HepG2 (cell line): ENCODE measurements at regions of chr6 and their contacts with region 1.

Region 1: GRCh38 chr6:27518881-27519795 is 46.2 kb upstream of the ZNF184 start:
- DNase-seq: peak; percentile 82
- ATAC-seq: peak; percentile 83
- H3K4me3 ChIP-seq: peak overlapping the region; percentile 72 to 86 (median 85)
- H3K27ac ChIP-seq: peak overlapping the region; percentile 39
- H3K4me1 ChIP-seq: peaks cover 19% of the 10 kb centered on the region
- H3K27me3 ChIP-seq: peaks cover 2 to 18% of the 10 kb centered on the region in 2 experiments; a peak in 1 of 5 replicates
- CTCF ChIP-seq: peak; percentile 73
- EP300 ChIP-seq: no peak
- POLR2A ChIP-seq: no peak
- RAD21 ChIP-seq: peak; percentile 43; the same call in 1 of the 2 replicates

Region 2: GRCh38 chr6:27188885-27189418 is 330.2 kb before region 1 on chr6:
- CTCF ChIA-PET with region 1: no interaction called
- POLR2A ChIA-PET with region 1: no interaction called
- in situ Hi-C with region 1: no loop called
- intact Hi-C with region 1: loop called (anchors 5 kb)
- DNase-seq: peak; percentile 66
- ATAC-seq: peak; percentile 88
- H3K4me3 ChIP-seq: peak overlapping the region; percentile 53 to 76 (median 75)
- H3K27ac ChIP-seq: no peak overlapping the region
- H3K4me1 ChIP-seq: peaks cover 16% of the 10 kb centered on the region
- H3K27me3 ChIP-seq: peaks cover 0 to 26% of the 10 kb centered on the region in 2 experiments; a peak in 3 of 5 replicates
- CTCF ChIP-seq: peak; percentile 79
- EP300 ChIP-seq: no peak
- POLR2A ChIP-seq: no peak
- RAD21 ChIP-seq: peak; percentile 82

Region 3: DNA sequence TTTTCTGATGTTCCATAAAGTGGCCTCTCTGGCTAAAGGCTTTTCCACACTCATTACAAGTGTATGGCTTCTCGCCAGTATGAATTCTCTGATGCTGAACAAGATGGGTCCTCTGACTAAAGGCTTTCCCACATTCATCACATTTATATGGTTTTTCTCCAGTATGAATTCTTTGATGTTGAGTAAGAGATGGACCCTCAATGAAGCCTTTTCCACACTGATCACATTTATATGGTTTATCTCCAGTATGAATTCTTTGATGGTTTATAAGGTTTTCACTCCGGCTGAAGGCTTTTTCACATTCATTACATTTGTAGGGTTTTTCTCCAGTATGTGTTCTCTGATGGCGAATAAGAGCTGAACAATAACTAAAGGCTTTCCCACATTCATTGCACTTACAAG is 66.6 kb before region 1 on chr6:
- CTCF ChIA-PET with region 1: no interaction called
- POLR2A ChIA-PET with region 1: no interaction called
- in situ Hi-C with region 1: no loop called
- intact Hi-C with region 1: no loop called
- DNase-seq: no peak
- ATAC-seq: no peak
- H3K4me3 ChIP-seq: no peak overlapping the region
- H3K27ac ChIP-seq: no peak overlapping the region
- H3K4me1 ChIP-seq: no peaks in the 10 kb centered on the region
- H3K27me3 ChIP-seq: no peaks in the 10 kb centered on the region
- CTCF ChIP-seq: no peak
- EP300 ChIP-seq: no peak
- POLR2A ChIP-seq: no peak
- RAD21 ChIP-seq: no peak

Region 4: GRCh38 chr6:27503436-27504030 is 15.6 kb before region 1 on chr6:
- CTCF ChIA-PET with region 1: no interaction called
- POLR2A ChIA-PET with region 1: interaction called, 3 read pairs
- in situ Hi-C with region 1: no loop called
- intact Hi-C with region 1: loop called (anchors 1 kb)
- DNase-seq: peak; percentile 82
- ATAC-seq: peak; percentile 60
- H3K4me3 ChIP-seq: peak overlapping the region; percentile 78 to 87 (median 79)
- H3K27ac ChIP-seq: peak overlapping the region; percentile 37
- H3K4me1 ChIP-seq: peaks cover 46% of the 10 kb centered on the region
- H3K27me3 ChIP-seq: peaks cover 0 to 4% of the 10 kb centered on the region in 2 experiments; a peak in 2 of 5 replicates
- CTCF ChIP-seq: no peak
- EP300 ChIP-seq: no peak
- POLR2A ChIP-seq: no peak
- RAD21 ChIP-seq: no peak

Region 5: DNA sequence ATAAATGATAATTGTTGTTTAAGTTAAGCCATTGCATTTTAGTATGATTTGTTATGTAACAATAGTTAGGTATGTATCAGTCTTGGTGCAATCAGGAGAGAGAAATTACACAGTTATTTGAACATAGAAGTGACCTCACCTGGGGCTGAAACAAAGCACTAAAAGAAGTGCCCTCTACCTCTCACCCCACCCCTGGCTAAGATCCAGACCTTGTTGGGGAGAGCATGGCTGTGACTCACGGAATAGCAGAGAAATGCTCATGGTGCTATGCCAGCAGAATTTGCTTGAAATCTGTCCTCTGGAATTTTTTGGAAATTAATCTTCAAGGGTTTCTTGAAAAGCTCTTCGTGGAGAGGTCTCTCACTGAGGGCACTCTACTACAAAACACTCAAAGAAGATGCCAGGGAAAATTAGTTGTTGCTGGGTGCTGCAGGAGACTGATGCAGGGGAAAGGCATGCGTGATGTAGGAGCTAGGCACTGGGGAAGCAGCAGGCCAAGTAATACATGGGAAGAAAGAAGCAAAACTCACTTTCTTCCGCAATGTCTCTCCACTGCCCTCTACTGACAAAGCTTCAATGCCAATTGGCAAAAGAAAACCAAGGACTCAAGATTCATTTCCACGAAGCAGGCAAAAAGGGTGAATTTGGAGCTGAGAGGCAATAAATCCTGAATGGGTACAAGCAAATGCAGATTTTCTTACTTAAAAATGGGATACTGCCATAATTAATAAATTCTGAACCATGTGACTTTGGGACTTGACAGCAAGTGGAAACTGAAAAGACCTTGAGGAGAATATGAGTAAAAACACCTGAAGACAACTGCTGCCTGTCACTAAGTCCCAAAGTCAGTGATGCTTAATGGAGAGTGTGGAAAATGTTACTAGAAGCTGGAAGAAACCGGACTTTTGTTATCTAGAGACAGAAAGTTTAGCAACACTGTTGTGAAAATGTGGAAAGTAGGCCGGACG is 90.1 kb after region 1 on chr6:
- CTCF ChIA-PET with region 1: interaction called, 21 read pairs
- POLR2A ChIA-PET with region 1: no interaction called
- in situ Hi-C with region 1: loop called (anchors 25 kb)
- intact Hi-C with region 1: loop called (anchors 1 kb)
- DNase-seq: peak; percentile 61
- ATAC-seq: peak; percentile 31; the same call in 2 of the 3 replicates
- H3K4me3 ChIP-seq: no peak overlapping the region
- H3K27ac ChIP-seq: no peak overlapping the region
- H3K4me1 ChIP-seq: peaks cover 31% of the 10 kb centered on the region
- H3K27me3 ChIP-seq: no peaks in the 10 kb centered on the region
- CTCF ChIP-seq: peak; percentile 85
- EP300 ChIP-seq: no peak
- POLR2A ChIP-seq: no peak
- RAD21 ChIP-seq: peak; percentile 47; the same call in 1 of the 2 replicates

Region 6: GRCh38 chr6:27753668-27754407 is 234.7 kb after region 1 on chr6:
- CTCF ChIA-PET with region 1: interaction called, 6 read pairs
- POLR2A ChIA-PET with region 1: interaction called, 4 read pairs
- in situ Hi-C with region 1: loop called (anchors 5 kb)
- intact Hi-C with region 1: loop called (anchors 1 kb)
- DNase-seq: peak; percentile 83
- ATAC-seq: peak; percentile 76
- H3K4me3 ChIP-seq: peak overlapping the region; percentile 63 to 88 (median 78)
- H3K27ac ChIP-seq: no peak overlapping the region
- H3K4me1 ChIP-seq: peaks cover 21% of the 10 kb centered on the region
- H3K27me3 ChIP-seq: peaks cover 0 to 3% of the 10 kb centered on the region in 2 experiments; a peak in 1 of 5 replicates
- CTCF ChIP-seq: no peak
- EP300 ChIP-seq: no peak
- POLR2A ChIP-seq: no peak
- RAD21 ChIP-seq: no peak